ENCODE measurements at regions of chr15 and their contacts with region 1.

Region 1: DNA sequence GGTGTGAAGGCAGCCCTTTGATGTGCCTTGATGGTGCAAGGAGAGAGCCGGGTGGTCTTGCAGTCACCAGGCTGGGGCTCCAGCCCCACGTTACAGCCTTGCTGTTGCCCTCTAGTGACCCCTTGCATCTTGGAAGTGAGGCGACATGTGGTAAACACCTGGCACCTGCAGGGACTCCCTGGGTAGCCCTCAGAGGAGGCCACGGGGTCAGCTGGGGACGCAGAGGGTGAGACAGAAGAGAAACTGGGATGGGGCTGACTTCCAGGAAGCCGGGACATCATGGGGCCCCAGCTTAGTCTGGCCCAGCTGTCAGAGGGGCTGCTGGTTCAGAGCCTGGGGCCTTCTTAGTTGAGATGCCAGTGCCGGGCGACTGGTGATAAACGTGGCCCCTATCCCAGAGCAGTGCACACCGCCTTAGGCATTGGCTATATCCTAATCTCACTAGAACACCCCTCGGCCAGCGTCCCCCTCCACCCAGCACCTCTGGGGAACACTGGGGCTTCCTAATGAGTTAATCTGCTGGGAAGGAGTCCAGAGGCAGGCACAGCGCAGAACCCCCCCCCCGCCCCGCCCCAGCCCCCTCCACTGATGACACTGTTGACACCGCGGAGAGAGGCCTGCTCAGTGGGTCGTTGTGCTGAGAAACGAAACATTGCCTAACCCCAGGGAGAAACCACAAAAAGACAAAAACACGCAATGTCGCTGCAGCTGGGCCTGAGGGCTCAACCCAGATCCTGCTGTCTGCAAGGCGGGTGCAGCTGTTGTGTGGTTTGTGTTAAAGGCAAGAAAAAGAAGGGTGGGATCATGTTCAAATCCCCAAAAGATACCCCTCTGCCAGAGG is 60.5 kb upstream of the KLF13 start:
- DNase-seq: no peak
- ATAC-seq: peak; percentile 41
- H3K4me3 ChIP-seq: peak overlapping the region; percentile 24 to 69 (median 34); a peak in 5 of 6 replicates
- H3K27ac ChIP-seq: peak overlapping the region; percentile 77
- H3K4me1 ChIP-seq: peaks cover 76% of the 10 kb centered on the region
- H3K27me3 ChIP-seq: 0 out of 5 replicates have a peak, but pooled peaks cover 0 to 1% of the 10 kb centered on the region in 2 experiments
- CTCF ChIP-seq: no peak
- EP300 ChIP-seq: no peak
- POLR2A ChIP-seq: no peak
- RAD21 ChIP-seq: no peak

Region 2: GRCh38 chr15:30953731-30954378 is 312.2 kb before region 1 on chr15:
- CTCF ChIA-PET with region 1: no interaction called
- POLR2A ChIA-PET with region 1: no interaction called
- in situ Hi-C with region 1: no loop called
- intact Hi-C with region 1: no loop called
- DNase-seq: no peak
- ATAC-seq: no peak
- H3K4me3 ChIP-seq: no peak overlapping the region
- H3K27ac ChIP-seq: no peak overlapping the region
- H3K4me1 ChIP-seq: no peaks in the 10 kb centered on the region
- H3K27me3 ChIP-seq: no peaks in the 10 kb centered on the region
- CTCF ChIP-seq: no peak
- EP300 ChIP-seq: no peak
- POLR2A ChIP-seq: no peak
- RAD21 ChIP-seq: no peak

Region 3: GRCh38 chr15:31150721-31151231 is 115.3 kb before region 1 on chr15:
- CTCF ChIA-PET with region 1: no interaction called
- POLR2A ChIA-PET with region 1: no interaction called
- in situ Hi-C with region 1: no loop called
- intact Hi-C with region 1: no loop called
- DNase-seq: no peak
- ATAC-seq: no peak
- H3K4me3 ChIP-seq: no peak overlapping the region
- H3K27ac ChIP-seq: no peak overlapping the region
- H3K4me1 ChIP-seq: peaks cover 70% of the 10 kb centered on the region
- H3K27me3 ChIP-seq: no peaks in the 10 kb centered on the region
- CTCF ChIP-seq: no peak
- EP300 ChIP-seq: no peak
- POLR2A ChIP-seq: no peak
- RAD21 ChIP-seq: no peak

Region 4: DNA sequence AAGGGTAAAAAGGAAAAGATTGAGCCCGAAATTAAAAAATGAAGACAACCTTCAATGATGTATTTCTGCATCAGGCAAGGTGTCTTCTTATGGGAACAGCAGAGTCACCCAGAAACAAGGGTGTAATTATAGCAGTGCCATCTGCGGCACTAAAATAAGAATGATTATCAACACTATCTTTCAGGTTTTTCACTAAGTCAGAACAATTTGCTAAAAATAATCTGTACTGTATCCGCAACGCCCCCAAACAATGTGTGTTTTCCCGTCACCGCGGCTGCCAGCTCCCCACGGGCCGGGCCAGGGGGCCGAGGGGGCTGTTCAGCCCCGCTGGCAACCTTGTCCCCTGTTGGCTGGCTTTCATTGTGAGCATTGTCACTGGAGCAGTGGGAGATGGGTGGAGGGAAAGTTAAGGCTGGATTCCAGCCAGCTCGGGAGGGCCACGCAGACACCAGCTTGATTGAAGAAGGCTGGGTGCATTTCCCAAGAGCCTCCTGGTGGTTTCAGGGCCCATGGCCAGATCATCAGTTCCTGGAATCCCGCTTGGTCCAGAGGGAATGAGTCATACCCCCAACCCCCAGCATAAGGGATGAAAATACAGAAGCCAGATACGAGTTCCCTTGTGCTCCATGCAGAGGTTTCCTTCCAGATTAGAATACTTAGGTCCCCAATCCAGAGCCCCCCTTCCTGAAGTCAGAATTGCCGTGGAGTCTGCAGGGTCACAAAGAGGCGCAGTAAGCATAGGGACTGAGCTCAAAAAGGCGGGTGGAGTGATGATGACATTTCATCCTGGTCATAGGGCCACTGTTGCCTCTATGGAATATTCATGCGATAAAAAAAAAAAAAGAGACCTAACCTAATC is 29.7 kb before region 1 on chr15:
- CTCF ChIA-PET with region 1: no interaction called
- POLR2A ChIA-PET with region 1: interaction called, 15 read pairs
- in situ Hi-C with region 1: no loop called
- intact Hi-C with region 1: no loop called
- DNase-seq: peak; percentile 64
- ATAC-seq: peak; percentile 92
- H3K4me3 ChIP-seq: peak overlapping the region; percentile 33 to 66 (median 55)
- H3K27ac ChIP-seq: no peak overlapping the region
- H3K4me1 ChIP-seq: peaks cover 21% of the 10 kb centered on the region
- H3K27me3 ChIP-seq: peaks cover 0 to 2% of the 10 kb centered on the region in 2 experiments; a peak in 1 of 5 replicates
- CTCF ChIP-seq: peak; percentile 11; the same call in 1 of the 2 replicates
- EP300 ChIP-seq: no peak
- POLR2A ChIP-seq: no peak
- RAD21 ChIP-seq: no peak

Region 5: GRCh38 chr15:31280046-31280830 is 14.1 kb after region 1 on chr15:
- CTCF ChIA-PET with region 1: no interaction called
- POLR2A ChIA-PET with region 1: interaction called, 16 read pairs
- in situ Hi-C with region 1: no loop called
- intact Hi-C with region 1: no loop called
- DNase-seq: peak; percentile 68
- ATAC-seq: peak; percentile 70
- H3K4me3 ChIP-seq: peak overlapping the region; percentile 19 to 65 (median 36); a peak in 4 of 6 replicates
- H3K27ac ChIP-seq: no peak overlapping the region
- H3K4me1 ChIP-seq: peaks cover 31% of the 10 kb centered on the region
- H3K27me3 ChIP-seq: no peaks in the 10 kb centered on the region
- CTCF ChIP-seq: no peak
- EP300 ChIP-seq: peak in 1 of 2 experiments; percentile 36; a peak in 1 of 4 replicates
- POLR2A ChIP-seq: no peak
- RAD21 ChIP-seq: no peak

Region 6: GRCh38 chr15:31296646-31297574 is 30.8 kb after region 1 on chr15:
- CTCF ChIA-PET with region 1: no interaction called
- POLR2A ChIA-PET with region 1: interaction called, 24 read pairs
- in situ Hi-C with region 1: no loop called
- intact Hi-C with region 1: no loop called
- DNase-seq: peak; percentile 97
- ATAC-seq: peak; percentile 94
- H3K4me3 ChIP-seq: peak overlapping the region in 1 of 3 experiments; percentile 38; a peak in 3 of 6 replicates
- H3K27ac ChIP-seq: peak overlapping the region; percentile 81
- H3K4me1 ChIP-seq: peaks cover 95% of the 10 kb centered on the region
- H3K27me3 ChIP-seq: no peaks in the 10 kb centered on the region
- CTCF ChIP-seq: peak; percentile 41
- EP300 ChIP-seq: peak; percentile 78 to 91; a peak in 3 of 4 replicates
- POLR2A ChIP-seq: peak; percentile 45 to 50; a peak in 2 of 4 replicates
- RAD21 ChIP-seq: peak; percentile 57

Region 7: GRCh38 chr15:31302778-31303725 is 37.0 kb after region 1 on chr15:
- CTCF ChIA-PET with region 1: no interaction called
- POLR2A ChIA-PET with region 1: interaction called, 24 read pairs
- in situ Hi-C with region 1: no loop called
- intact Hi-C with region 1: loop called (anchors 1 kb)
- DNase-seq: no peak
- ATAC-seq: peak; percentile 28
- H3K4me3 ChIP-seq: peak overlapping the region in 1 of 3 experiments; percentile 63; a peak in 2 of 6 replicates
- H3K27ac ChIP-seq: no peak overlapping the region
- H3K4me1 ChIP-seq: peaks cover 84% of the 10 kb centered on the region
- H3K27me3 ChIP-seq: no peaks in the 10 kb centered on the region
- CTCF ChIP-seq: no peak
- EP300 ChIP-seq: no peak
- POLR2A ChIP-seq: no peak
- RAD21 ChIP-seq: no peak

Region 8: DNA sequence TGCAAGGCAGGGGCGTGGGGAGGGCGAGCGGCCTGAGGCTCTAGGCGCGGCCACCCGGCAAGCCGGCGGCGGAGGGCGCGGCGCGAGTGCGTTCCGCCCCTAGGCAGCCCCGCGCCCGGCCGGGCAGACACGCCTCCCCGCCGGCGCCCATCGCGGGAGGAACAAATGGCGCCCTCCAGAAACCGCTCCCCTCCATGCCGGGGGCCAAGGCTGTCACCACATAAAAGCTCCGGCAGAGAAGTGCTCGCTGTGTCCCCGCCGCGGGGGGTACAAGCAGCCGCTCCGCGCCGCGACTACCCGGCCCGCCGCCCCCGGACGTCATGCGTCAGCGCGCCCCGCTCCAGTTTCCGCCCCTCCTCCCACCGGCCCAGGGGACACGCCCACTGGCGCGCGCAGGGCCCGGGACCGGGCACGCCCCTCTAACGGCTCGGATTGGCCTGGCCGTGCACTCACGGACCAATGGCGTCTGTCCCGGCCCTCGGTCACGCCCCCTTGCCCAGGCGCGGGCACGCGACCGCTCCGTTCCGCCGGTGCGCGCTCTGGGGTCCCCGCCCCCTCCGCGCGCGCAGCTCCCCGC is 60.2 kb after region 1 on chr15:
- CTCF ChIA-PET with region 1: no interaction called
- POLR2A ChIA-PET with region 1: interaction called, 26 read pairs
- in situ Hi-C with region 1: no loop called
- intact Hi-C with region 1: no loop called
- DNase-seq: peak; percentile 89
- ATAC-seq: peak; percentile 83
- H3K4me3 ChIP-seq: peak overlapping the region; percentile 79 to 90 (median 89)
- H3K27ac ChIP-seq: peak overlapping the region; percentile 82
- H3K4me1 ChIP-seq: peaks cover 47% of the 10 kb centered on the region
- H3K27me3 ChIP-seq: peaks cover 0 to 3% of the 10 kb centered on the region in 2 experiments; a peak in 1 of 5 replicates
- CTCF ChIP-seq: no peak; the same call in 1 of the 2 replicates
- EP300 ChIP-seq: no peak
- POLR2A ChIP-seq: 0 out of 4 replicates have a peak, but pooled peaks of 1 of the 2 experiments have one; percentile 35
- RAD21 ChIP-seq: peak; percentile 41; the same call in 1 of the 2 replicates

Region 9: GRCh38 chr15:31605371-31605931 is 339.4 kb after region 1 on chr15:
- CTCF ChIA-PET with region 1: no interaction called
- POLR2A ChIA-PET with region 1: no interaction called
- in situ Hi-C with region 1: no loop called
- intact Hi-C with region 1: no loop called
- DNase-seq: no peak
- ATAC-seq: peak; percentile 47; the same call in 1 of the 3 replicates
- H3K4me3 ChIP-seq: no peak overlapping the region
- H3K27ac ChIP-seq: no peak overlapping the region
- H3K4me1 ChIP-seq: no peaks in the 10 kb centered on the region
- H3K27me3 ChIP-seq: no peaks in the 10 kb centered on the region
- CTCF ChIP-seq: peak; percentile 23; the same call in 1 of the 2 replicates
- EP300 ChIP-seq: no peak
- POLR2A ChIP-seq: no peak
- RAD21 ChIP-seq: no peak

Measured in HepG2 (cell line).